Naive thymus-derived CD4-positive, alpha-beta T cell (primary cell): ENCODE measurements at regions of chr13 and their contacts with region 1.

Region 1: GRCh38 chr13:41061075-41061913 is at the start of gene WBP4:
- DNase-seq: peak; percentile 81 to 94 (median 90)
- ATAC-seq: peak; percentile 78
- H3K4me3 ChIP-seq: peak within 1 kb of the TSS; percentile 74
- H3K4me3 Mint-ChIP-seq: peak within 1 kb of the TSS; percentile 97 to 100 (median 99)
- H3K27ac ChIP-seq: peak within 1 kb of the TSS; percentile 77
- H3K27ac Mint-ChIP-seq: peak within 1 kb of the TSS; percentile 95 to 100 (median 100)
- H3K4me1 ChIP-seq: peaks cover 0 to 5% of the 10 kb centered on the region in 2 donors
- H3K4me1 Mint-ChIP-seq: peaks cover 33 to 82% (median 59%) of the 10 kb centered on the region in 7 donors
- H3K27me3 ChIP-seq: no peaks in the 10 kb centered on the region
- H3K27me3 Mint-ChIP-seq: peaks cover 0 to 10% (median 0%) of the 10 kb centered on the region in 5 donors
- total RNA-seq, gene WBP4: 6.5 to 9.8 (median 8.6) TPM

Region 2: GRCh38 chr13:40777166-40777808 is 284.0 kb before region 1 on chr13:
- CTCF ChIA-PET with region 1: no interaction called
- POLR2A ChIA-PET with region 1: no interaction called
- intact Hi-C with region 1: loop called in 1 of 2 experiments (anchors 1 kb)
- DNase-seq: peak in 2 of 9 donors; percentile 15 to 44
- ATAC-seq: peak; percentile 78
- H3K4me3 ChIP-seq: peak overlapping the region; percentile 37
- H3K4me3 Mint-ChIP-seq: peak overlapping the region; percentile 68 to 92 (median 82)
- H3K27ac ChIP-seq: peak overlapping the region; percentile 61
- H3K27ac Mint-ChIP-seq: peak overlapping the region; percentile 94 to 99 (median 97)
- H3K4me1 ChIP-seq: peaks cover 21 to 24% of the 10 kb centered on the region in 2 donors
- H3K4me1 Mint-ChIP-seq: peaks cover 19 to 36% (median 32%) of the 10 kb centered on the region in 7 donors
- H3K27me3 ChIP-seq: no peaks in the 10 kb centered on the region
- H3K27me3 Mint-ChIP-seq: no peaks in the 10 kb centered on the region

Region 3: GRCh38 chr13:40982772-40983171 is 78.5 kb before region 1 on chr13:
- CTCF ChIA-PET with region 1: interaction called, 4 read pairs
- POLR2A ChIA-PET with region 1: interaction called, 27 read pairs
- intact Hi-C with region 1: loop called (anchors 1 kb)
- DNase-seq: peak in 8 of 9 donors; percentile 41 to 90 (median 80)
- ATAC-seq: peak; percentile 82
- H3K4me3 ChIP-seq: no peak overlapping the region
- H3K4me3 Mint-ChIP-seq: peak overlapping the region; percentile 76 to 99 (median 94)
- H3K27ac ChIP-seq: peak overlapping the region; percentile 86
- H3K27ac Mint-ChIP-seq: peak overlapping the region; percentile 93 to 98 (median 96)
- H3K4me1 ChIP-seq: peaks cover 30 to 34% of the 10 kb centered on the region in 2 donors
- H3K4me1 Mint-ChIP-seq: peaks cover 40 to 77% (median 65%) of the 10 kb centered on the region in 7 donors
- H3K27me3 ChIP-seq: no peaks in the 10 kb centered on the region
- H3K27me3 Mint-ChIP-seq: no peaks in the 10 kb centered on the region

Region 4: GRCh38 chr13:41075034-41075433 is 13.7 kb after region 1 on chr13:
- CTCF ChIA-PET with region 1: interaction called, 4 read pairs
- POLR2A ChIA-PET with region 1: interaction called, 10 read pairs
- intact Hi-C with region 1: no loop called
- DNase-seq: peak in 7 of 9 donors; percentile 15 to 58 (median 51)
- ATAC-seq: peak; percentile 63
- H3K4me3 ChIP-seq: no peak overlapping the region
- H3K4me3 Mint-ChIP-seq: no peak overlapping the region
- H3K27ac ChIP-seq: no peak overlapping the region
- H3K27ac Mint-ChIP-seq: no peak overlapping the region
- H3K4me1 ChIP-seq: no peaks in the 10 kb centered on the region
- H3K4me1 Mint-ChIP-seq: no peaks in the 10 kb centered on the region
- H3K27me3 ChIP-seq: no peaks in the 10 kb centered on the region
- H3K27me3 Mint-ChIP-seq: no peaks in the 10 kb centered on the region

Region 5: DNA sequence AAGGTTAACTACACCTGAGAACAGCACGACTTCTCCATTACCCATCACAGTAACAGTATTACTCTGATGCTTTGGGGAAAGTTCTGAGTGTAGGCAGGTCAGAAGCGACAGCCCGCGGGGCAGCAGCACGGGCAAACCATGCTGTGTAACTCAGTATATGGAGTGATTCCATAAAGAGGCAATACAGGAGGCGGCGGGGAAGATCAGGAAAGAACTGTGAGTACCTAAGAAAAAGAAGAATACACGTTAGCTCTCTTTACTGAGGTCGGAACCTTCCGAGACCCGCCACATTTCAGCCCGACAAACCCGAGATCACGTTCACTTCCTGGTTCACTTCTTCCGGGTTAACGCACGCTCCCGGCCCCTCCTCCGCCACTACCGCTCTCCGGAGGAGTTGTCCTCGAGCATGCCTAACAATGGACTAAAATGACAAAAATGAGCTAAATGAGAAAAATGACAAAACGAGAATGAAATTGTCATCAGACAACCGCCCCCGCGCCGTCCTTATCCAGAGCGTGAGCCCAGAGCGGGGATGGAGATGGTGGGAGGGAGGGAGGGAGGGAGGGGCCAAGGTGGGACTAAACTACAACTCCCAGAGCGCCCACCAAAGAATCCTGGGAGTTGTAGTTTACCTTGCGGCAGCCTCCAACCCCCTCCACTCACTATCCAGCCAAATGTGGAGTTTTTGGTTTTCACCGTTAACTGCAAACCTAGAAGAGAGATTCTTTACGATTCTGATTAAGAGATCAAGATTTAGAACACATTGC is 202.2 kb after region 1 on chr13 and contains the start of gene MTRF1:
- CTCF ChIA-PET with region 1: interaction called, 6 read pairs
- POLR2A ChIA-PET with region 1: interaction called, 3 read pairs
- intact Hi-C with region 1: loop called (anchors 1 kb)
- DNase-seq: peak; percentile 70 to 91 (median 88)
- ATAC-seq: peak; percentile 94
- H3K4me3 ChIP-seq: peak within 1 kb of the TSS; percentile 76
- H3K4me3 Mint-ChIP-seq: peak within 1 kb of the TSS; percentile 84 to 100 (median 96)
- H3K27ac ChIP-seq: peak within 1 kb of the TSS; percentile 79
- H3K27ac Mint-ChIP-seq: peak within 1 kb of the TSS; percentile 92 to 99 (median 96)
- H3K4me1 ChIP-seq: peaks cover 0 to 3% of the 10 kb centered on the region in 2 donors
- H3K4me1 Mint-ChIP-seq: peaks cover 10 to 61% (median 28%) of the 10 kb centered on the region in 7 donors
- H3K27me3 ChIP-seq: no peaks in the 10 kb centered on the region
- H3K27me3 Mint-ChIP-seq: no peaks in the 10 kb centered on the region
- total RNA-seq, gene MTRF1: 21.7 to 38.2 (median 30.9) TPM

Region 6: GRCh38 chr13:41465241-41465847 is 404.1 kb after region 1 on chr13:
- CTCF ChIA-PET with region 1: no interaction called
- POLR2A ChIA-PET with region 1: no interaction called
- intact Hi-C with region 1: loop called in 1 of 2 experiments (anchors 2 kb)
- DNase-seq: peak; percentile 63 to 90 (median 89)
- ATAC-seq: peak; percentile 72
- H3K4me3 ChIP-seq: peak overlapping the region; percentile 51
- H3K4me3 Mint-ChIP-seq: peak overlapping the region; percentile 89 to 98 (median 94)
- H3K27ac ChIP-seq: peak overlapping the region; percentile 97
- H3K27ac Mint-ChIP-seq: peak overlapping the region; percentile 96 to 100 (median 99)
- H3K4me1 ChIP-seq: peaks cover 64 to 87% of the 10 kb centered on the region in 2 donors
- H3K4me1 Mint-ChIP-seq: peaks cover 64 to 98% (median 93%) of the 10 kb centered on the region in 7 donors
- H3K27me3 ChIP-seq: no peaks in the 10 kb centered on the region
- H3K27me3 Mint-ChIP-seq: no peaks in the 10 kb centered on the region

Region 7: DNA sequence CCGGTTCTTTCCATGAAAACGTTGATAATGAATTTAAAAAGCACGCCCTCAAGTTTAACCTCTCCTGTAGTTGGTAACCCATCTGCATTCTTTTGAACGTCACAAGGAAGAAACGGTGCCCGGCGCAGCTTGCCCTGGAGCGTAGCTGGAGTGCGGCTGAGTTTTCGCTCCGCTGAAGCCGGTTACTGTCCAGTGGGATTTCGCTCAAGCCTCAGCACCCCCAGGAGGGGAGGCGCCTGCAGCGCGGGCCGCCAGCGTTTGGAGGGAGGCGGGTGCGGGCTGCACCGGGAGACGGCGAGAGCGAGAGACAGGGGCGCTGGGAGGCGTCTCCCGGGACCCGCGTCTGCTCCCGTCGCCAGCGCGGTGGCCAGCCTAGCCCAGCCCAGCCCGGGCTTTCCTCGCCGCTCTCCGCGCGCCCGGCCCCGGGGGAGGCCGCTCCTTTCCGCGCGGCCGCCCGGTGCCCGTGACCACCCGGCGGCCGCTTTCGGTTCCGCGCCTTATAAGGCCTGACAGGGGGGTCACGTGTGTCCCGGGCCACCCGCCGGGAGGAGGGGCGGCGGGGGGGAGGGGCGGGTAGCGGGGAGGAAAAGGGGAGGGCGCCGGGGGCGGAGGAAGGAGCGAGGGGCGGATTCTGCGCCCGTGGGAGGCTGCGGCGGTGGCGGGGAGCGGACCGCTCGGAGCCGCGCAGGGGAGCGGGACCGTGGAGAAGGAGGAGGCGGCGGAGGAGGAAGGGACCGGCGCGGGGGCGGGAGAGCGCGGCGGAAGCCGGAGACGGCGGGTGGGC is 978.8 kb after region 1 on chr13:
- CTCF ChIA-PET with region 1: no interaction called
- POLR2A ChIA-PET with region 1: no interaction called
- intact Hi-C with region 1: loop called in 1 of 2 experiments (anchors 2 kb)
- DNase-seq: peak; percentile 67 to 87 (median 79)
- ATAC-seq: peak; percentile 92
- H3K4me3 ChIP-seq: peak overlapping the region; percentile 70
- H3K4me3 Mint-ChIP-seq: peak overlapping the region; percentile 83 to 95 (median 90)
- H3K27ac ChIP-seq: peak overlapping the region; percentile 73
- H3K27ac Mint-ChIP-seq: peak overlapping the region; percentile 29 to 91 (median 84)
- H3K4me1 ChIP-seq: peaks cover 7 to 8% of the 10 kb centered on the region in 2 donors
- H3K4me1 Mint-ChIP-seq: peaks cover 7 to 22% (median 20%) of the 10 kb centered on the region in 7 donors
- H3K27me3 ChIP-seq: no peaks in the 10 kb centered on the region
- H3K27me3 Mint-ChIP-seq: peaks cover 0 to 58% (median 0%) of the 10 kb centered on the region in 5 donors